Naive thymus-derived CD4-positive, alpha-beta T cell (primary cell): ENCODE measurements at regions of chrX and their contacts with region 1.

Region 1: GRCh38 chrX:103918581-103919269 is 43.7 kb upstream of the TMSB15B start:
- DNase-seq: peak; percentile 19 to 64 (median 61)
- ATAC-seq: peak; percentile 86
- H3K4me3 ChIP-seq: peak overlapping the region; percentile 70
- H3K4me3 Mint-ChIP-seq: peak overlapping the region; percentile 89 to 97 (median 92)
- H3K27ac ChIP-seq: peak overlapping the region; percentile 74
- H3K27ac Mint-ChIP-seq: peak overlapping the region; percentile 79 to 95 (median 89)
- H3K4me1 ChIP-seq: peaks cover 3 to 8% of the 10 kb centered on the region in 2 donors
- H3K4me1 Mint-ChIP-seq: peaks cover 9 to 29% (median 18%) of the 10 kb centered on the region in 7 donors
- H3K27me3 ChIP-seq: no peaks in the 10 kb centered on the region
- H3K27me3 Mint-ChIP-seq: no peaks in the 10 kb centered on the region

Region 2: GRCh38 chrX:103629318-103630170 is 289.2 kb before region 1 on chrX:
- CTCF ChIA-PET with region 1: no interaction called
- POLR2A ChIA-PET with region 1: no interaction called
- intact Hi-C with region 1: loop called in 1 of 2 experiments (anchors 5 kb)
- DNase-seq: peak in 7 of 9 donors; percentile 3 to 25 (median 11)
- ATAC-seq: peak; percentile 60
- H3K4me3 ChIP-seq: peak overlapping the region; percentile 71
- H3K4me3 Mint-ChIP-seq: peak overlapping the region; percentile 80 to 93 (median 89)
- H3K27ac ChIP-seq: peak overlapping the region; percentile 75
- H3K27ac Mint-ChIP-seq: peak overlapping the region; percentile 17 to 91 (median 81)
- H3K4me1 ChIP-seq: no peaks in the 10 kb centered on the region
- H3K4me1 Mint-ChIP-seq: peaks cover 7 to 19% (median 14%) of the 10 kb centered on the region in 7 donors
- H3K27me3 ChIP-seq: no peaks in the 10 kb centered on the region
- H3K27me3 Mint-ChIP-seq: no peaks in the 10 kb centered on the region

Region 3: GRCh38 chrX:103845165-103845653 is 73.5 kb before region 1 on chrX:
- CTCF ChIA-PET with region 1: no interaction called
- POLR2A ChIA-PET with region 1: no interaction called
- intact Hi-C with region 1: no loop called
- DNase-seq: peak in 7 of 9 donors; percentile 8 to 33 (median 25)
- ATAC-seq: no peak
- H3K4me3 ChIP-seq: no peak overlapping the region
- H3K4me3 Mint-ChIP-seq: no peak overlapping the region
- H3K27ac ChIP-seq: no peak overlapping the region
- H3K27ac Mint-ChIP-seq: no peak overlapping the region
- H3K4me1 ChIP-seq: no peaks in the 10 kb centered on the region
- H3K4me1 Mint-ChIP-seq: no peaks in the 10 kb centered on the region
- H3K27me3 ChIP-seq: no peaks in the 10 kb centered on the region
- H3K27me3 Mint-ChIP-seq: peaks cover 0 to 5% (median 0%) of the 10 kb centered on the region in 5 donors

Region 4: DNA sequence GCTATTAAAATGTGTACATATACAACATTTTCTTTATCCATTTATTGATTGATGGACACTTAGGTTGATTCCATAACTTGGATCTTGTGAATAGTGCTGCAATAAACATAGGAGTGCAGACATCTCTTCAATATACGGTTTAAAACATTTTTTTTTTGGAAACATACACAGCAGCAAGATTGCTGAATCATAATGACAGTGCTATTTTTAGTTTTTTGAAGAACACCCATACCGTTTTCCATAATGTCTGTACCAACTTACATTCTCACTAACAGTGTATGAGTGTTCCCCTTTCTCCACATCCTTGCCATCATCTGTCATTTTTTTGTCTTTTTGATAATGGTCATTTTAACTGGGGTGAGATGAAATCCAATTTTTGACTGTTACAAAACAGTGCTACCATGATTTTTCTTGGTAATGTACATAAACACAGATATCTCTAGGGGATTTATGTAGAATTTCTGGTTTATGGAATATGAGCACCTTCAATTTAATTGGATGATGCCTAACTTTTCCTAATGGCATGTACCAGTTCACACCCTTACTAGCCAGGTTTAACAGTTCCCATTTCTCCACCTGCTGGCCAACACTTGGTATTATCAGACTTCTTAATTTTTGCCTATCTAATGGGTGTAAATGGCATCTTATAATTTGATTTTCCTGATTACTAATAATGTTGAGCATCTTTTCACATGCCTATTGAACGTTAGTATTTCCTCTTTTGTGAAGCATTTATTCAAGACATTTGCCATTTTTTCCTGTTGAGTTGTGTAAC is 22.7 kb after region 1 on chrX:
- CTCF ChIA-PET with region 1: interaction called, 3 read pairs
- POLR2A ChIA-PET with region 1: no interaction called
- intact Hi-C with region 1: loop called (anchors 1 kb)
- DNase-seq: peak in 3 of 9 donors; percentile 10 to 36 (median 18)
- ATAC-seq: no peak
- H3K4me3 ChIP-seq: no peak overlapping the region
- H3K4me3 Mint-ChIP-seq: no peak overlapping the region
- H3K27ac ChIP-seq: no peak overlapping the region
- H3K27ac Mint-ChIP-seq: no peak overlapping the region
- H3K4me1 ChIP-seq: no peaks in the 10 kb centered on the region
- H3K4me1 Mint-ChIP-seq: peaks cover 0 to 28% (median 5%) of the 10 kb centered on the region in 7 donors
- H3K27me3 ChIP-seq: no peaks in the 10 kb centered on the region
- H3K27me3 Mint-ChIP-seq: no peaks in the 10 kb centered on the region

Region 5: DNA sequence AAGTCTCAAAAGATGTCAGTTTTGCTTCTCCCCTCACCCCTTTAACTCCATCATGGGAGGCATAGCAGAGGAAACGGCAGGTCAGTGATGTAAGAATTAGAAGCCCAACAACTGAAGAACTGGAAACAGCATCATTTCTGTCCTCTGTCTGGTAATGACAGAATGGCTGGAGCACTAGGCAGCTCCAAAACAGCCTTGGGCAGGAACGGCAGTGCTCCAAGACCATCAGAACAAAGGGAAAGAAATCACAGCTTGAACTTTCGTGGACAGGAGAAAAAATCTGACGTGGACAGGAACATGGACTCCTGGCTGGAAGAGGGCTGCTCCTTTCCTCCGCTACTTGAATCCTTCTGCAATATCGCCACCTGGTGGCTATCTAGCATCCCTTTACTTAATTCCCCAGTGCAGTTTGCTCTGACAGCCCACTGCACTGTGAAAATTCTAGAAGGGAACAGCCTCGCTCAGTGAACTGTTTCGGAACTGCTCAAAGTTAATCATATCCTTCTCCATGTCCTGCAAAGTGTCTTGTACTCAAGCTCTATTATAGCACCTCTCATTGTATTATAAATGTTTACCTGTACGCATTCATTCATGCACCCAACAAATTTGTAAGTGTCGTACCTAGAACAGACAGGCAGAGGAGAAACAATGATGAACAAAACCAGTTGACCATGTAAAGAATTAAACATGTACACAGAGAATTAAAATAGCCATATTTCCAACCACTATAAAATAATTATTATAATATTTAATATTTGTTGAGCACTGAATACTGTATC is 217.7 kb after region 1 on chrX:
- CTCF ChIA-PET with region 1: interaction called, 3 read pairs
- POLR2A ChIA-PET with region 1: no interaction called
- intact Hi-C with region 1: loop called in 1 of 2 experiments (anchors 5 kb)
- DNase-seq: peak in 8 of 9 donors; percentile 28 to 62 (median 49)
- ATAC-seq: peak; percentile 81
- H3K4me3 ChIP-seq: no peak overlapping the region
- H3K4me3 Mint-ChIP-seq: peak overlapping the region in 1 of 10 donors; percentile 25
- H3K27ac ChIP-seq: no peak overlapping the region
- H3K27ac Mint-ChIP-seq: no peak overlapping the region
- H3K4me1 ChIP-seq: peaks cover 0 to 6% of the 10 kb centered on the region in 2 donors
- H3K4me1 Mint-ChIP-seq: peaks cover 13 to 31% (median 21%) of the 10 kb centered on the region in 7 donors
- H3K27me3 ChIP-seq: no peaks in the 10 kb centered on the region
- H3K27me3 Mint-ChIP-seq: no peaks in the 10 kb centered on the region

Region 6: GRCh38 chrX:104165894-104166737 is 247.4 kb after region 1 on chrX and contains the start of gene FAM199X:
- CTCF ChIA-PET with region 1: no interaction called
- POLR2A ChIA-PET with region 1: no interaction called
- intact Hi-C with region 1: loop called in 1 of 2 experiments (anchors 1 kb)
- DNase-seq: peak; percentile 74 to 84 (median 79)
- ATAC-seq: peak; percentile 99
- H3K4me3 ChIP-seq: peak within 1 kb of the TSS; percentile 68
- H3K4me3 Mint-ChIP-seq: peak within 1 kb of the TSS; percentile 82 to 91 (median 86)
- H3K27ac ChIP-seq: peak within 1 kb of the TSS; percentile 83
- H3K27ac Mint-ChIP-seq: peak within 1 kb of the TSS; percentile 85 to 97 (median 87)
- H3K4me1 ChIP-seq: peaks cover 0 to 3% of the 10 kb centered on the region in 2 donors
- H3K4me1 Mint-ChIP-seq: peaks cover 28 to 41% (median 37%) of the 10 kb centered on the region in 7 donors
- H3K27me3 ChIP-seq: no peaks in the 10 kb centered on the region
- H3K27me3 Mint-ChIP-seq: no peaks in the 10 kb centered on the region
- total RNA-seq, gene FAM199X: 12.6 to 20.4 (median 13.4) TPM